T-cell (primary cell): ENCODE measurements at regions of chr3 and their contacts with region 1.

Region 1: DNA sequence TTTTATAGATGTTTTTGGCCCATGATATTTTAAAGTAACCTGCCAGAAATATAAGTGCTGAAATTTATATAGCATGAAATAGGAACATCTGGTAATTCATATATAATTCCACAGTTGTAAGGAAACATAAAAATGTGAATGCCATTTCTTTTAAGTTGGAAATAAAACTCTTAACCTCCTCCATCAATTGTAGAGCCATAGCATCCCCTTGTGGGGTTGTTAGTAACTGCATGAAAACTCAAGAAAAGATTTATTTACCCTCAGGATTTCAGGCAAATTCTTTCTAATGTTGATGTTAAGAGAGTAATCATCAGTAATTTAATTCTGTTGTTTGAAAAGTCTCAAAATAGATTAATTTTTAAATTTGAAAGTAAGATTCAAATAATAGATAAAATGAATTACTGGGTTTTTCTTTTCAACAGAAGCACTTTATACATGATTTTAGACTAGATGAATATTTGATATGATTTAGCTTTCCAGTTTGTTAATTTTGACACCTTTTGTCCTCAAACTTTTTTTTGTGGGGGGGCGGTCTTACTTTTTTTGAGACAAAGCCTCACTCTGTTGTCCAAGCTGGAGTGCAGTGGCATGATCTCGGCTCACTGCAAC is 74.7 kb downstream of the RASA2 start:
- DNase-seq: peak in 20 of 35 experiments; percentile 10 to 86 (median 42)
- ATAC-seq: peak; percentile 43 to 54 (median 51)
- H3K4me3 ChIP-seq: no peak overlapping the region
- H3K4me3 Mint-ChIP-seq: no peak overlapping the region
- H3K27ac ChIP-seq: peak overlapping the region; percentile 1
- H3K27ac Mint-ChIP-seq: peak overlapping the region; percentile 41 to 82
- H3K4me1 ChIP-seq: peaks cover 0 to 37% of the 10 kb centered on the region in 2 experiments
- H3K4me1 Mint-ChIP-seq: peaks cover 31 to 34% (median 32%) of the 10 kb centered on the region in 3 donors
- H3K27me3 ChIP-seq: no peaks in the 10 kb centered on the region
- H3K27me3 Mint-ChIP-seq: no peaks in the 10 kb centered on the region

Region 2: DNA sequence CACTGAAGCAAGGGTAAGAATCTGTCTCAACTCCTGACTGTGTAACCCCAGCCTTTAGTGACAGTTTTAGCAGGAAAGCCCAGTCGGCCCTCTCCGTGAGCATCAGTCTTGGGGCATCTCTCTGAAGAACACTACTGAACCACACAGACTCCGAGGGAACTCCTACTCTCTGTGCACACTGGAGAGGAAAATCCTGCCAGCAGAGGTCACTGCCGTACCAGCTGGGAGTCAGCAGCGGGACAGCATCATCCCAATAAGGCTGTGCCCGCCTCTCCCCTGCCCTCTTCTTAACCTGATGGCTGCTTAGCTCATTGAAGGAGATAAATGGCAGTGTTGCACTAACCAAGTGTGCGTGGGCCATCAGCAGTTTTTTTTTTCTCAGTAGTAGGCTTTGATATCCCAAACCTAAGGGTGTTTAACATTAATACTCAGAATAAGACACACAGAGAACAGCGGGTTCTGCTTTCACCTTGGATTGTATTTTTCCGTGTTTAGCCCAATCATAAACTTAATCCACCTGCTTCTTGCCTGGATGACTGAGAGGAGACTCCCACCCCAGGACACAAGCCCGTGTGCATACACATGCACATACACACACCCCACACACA is 101.3 kb before region 1 on chr3:
- CTCF ChIA-PET with region 1: interaction called, 71 to 104 read pairs
- POLR2A ChIA-PET with region 1: interaction called, 4 to 5 read pairs
- DNase-seq: peak; percentile 71 to 92 (median 85)
- ATAC-seq: peak; percentile 98 to 100 (median 100)
- H3K4me3 ChIP-seq: no peak overlapping the region
- H3K4me3 Mint-ChIP-seq: no peak overlapping the region
- H3K27ac ChIP-seq: no peak overlapping the region
- H3K27ac Mint-ChIP-seq: no peak overlapping the region
- H3K4me1 ChIP-seq: peaks cover 0 to 7% of the 10 kb centered on the region in 2 experiments
- H3K4me1 Mint-ChIP-seq: peaks cover 4 to 11% (median 7%) of the 10 kb centered on the region in 3 donors
- H3K27me3 ChIP-seq: peaks cover 0 to 6% of the 10 kb centered on the region in 2 experiments
- H3K27me3 Mint-ChIP-seq: no peaks in the 10 kb centered on the region

Region 3: DNA sequence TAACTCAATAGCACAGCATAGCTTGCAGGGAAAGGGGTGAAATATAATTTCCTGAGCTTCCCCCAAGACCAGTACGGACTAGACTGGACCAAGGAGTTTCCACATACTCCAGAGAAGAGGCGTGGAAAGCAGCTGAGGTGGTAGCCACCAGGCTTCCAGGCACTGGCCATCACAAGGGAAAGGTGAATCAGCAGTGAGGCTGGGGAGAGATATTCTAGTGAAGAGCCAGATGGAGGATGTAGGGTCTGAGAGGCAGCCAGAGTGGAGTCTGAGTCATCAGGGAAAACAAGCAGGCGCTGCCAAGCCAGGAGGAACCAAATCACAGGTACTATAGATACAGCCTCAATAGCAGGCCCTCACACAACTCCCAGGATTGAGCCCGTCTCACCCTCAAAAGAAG is 84.3 kb before region 1 on chr3:
- CTCF ChIA-PET with region 1: interaction called, 8 to 20 read pairs
- POLR2A ChIA-PET with region 1: interaction called in 1 of 2 experiments, 7 read pairs
- DNase-seq: no peak
- ATAC-seq: peak in 1 of 4 experiments; percentile 26
- H3K4me3 ChIP-seq: no peak overlapping the region
- H3K4me3 Mint-ChIP-seq: no peak overlapping the region
- H3K27ac ChIP-seq: no peak overlapping the region
- H3K27ac Mint-ChIP-seq: no peak overlapping the region
- H3K4me1 ChIP-seq: peaks cover 7 to 21% of the 10 kb centered on the region in 2 experiments
- H3K4me1 Mint-ChIP-seq: peaks cover 36 to 43% (median 38%) of the 10 kb centered on the region in 3 donors
- H3K27me3 ChIP-seq: no peaks in the 10 kb centered on the region
- H3K27me3 Mint-ChIP-seq: no peaks in the 10 kb centered on the region

Region 4: GRCh38 chr3:141487521-141488252 is 73.8 kb before region 1 on chr3:
- CTCF ChIA-PET with region 1: interaction called, 4 to 11 read pairs
- POLR2A ChIA-PET with region 1: interaction called, 3 to 4 read pairs
- DNase-seq: peak; percentile 75 to 91 (median 85)
- ATAC-seq: peak; percentile 69 to 75 (median 74)
- H3K4me3 ChIP-seq: peak overlapping the region; percentile 84
- H3K4me3 Mint-ChIP-seq: peak overlapping the region; percentile 80 to 92 (median 87)
- H3K27ac ChIP-seq: peak overlapping the region; percentile 88
- H3K27ac Mint-ChIP-seq: peak overlapping the region; percentile 97
- H3K4me1 ChIP-seq: peaks cover 33 to 52% of the 10 kb centered on the region in 2 experiments
- H3K4me1 Mint-ChIP-seq: peaks cover 67 to 78% (median 76%) of the 10 kb centered on the region in 3 donors
- H3K27me3 ChIP-seq: no peaks in the 10 kb centered on the region
- H3K27me3 Mint-ChIP-seq: no peaks in the 10 kb centered on the region

Region 5: DNA sequence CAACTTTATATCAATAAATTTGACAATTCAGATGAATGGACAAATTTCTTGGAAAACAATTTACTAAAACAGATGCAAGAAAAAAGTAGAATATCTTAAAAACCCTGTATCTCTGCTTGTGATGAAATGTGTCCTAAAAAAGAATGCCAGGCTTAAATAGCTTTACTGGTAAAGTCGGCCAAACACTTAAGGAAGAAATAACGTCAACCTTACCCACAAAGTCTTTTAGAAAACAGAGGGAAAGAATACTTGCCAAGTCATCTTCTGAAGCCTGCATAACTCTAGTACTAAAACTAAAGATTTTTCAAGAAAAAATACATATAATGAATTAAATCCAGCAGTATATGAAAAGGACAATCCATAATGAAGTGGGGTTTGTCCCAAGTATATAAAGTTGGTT is 36.4 kb after region 1 on chr3:
- CTCF ChIA-PET with region 1: no interaction called
- POLR2A ChIA-PET with region 1: no interaction called
- DNase-seq: no peak
- ATAC-seq: no peak
- H3K4me3 ChIP-seq: no peak overlapping the region
- H3K4me3 Mint-ChIP-seq: no peak overlapping the region
- H3K27ac ChIP-seq: no peak overlapping the region
- H3K27ac Mint-ChIP-seq: peak overlapping the region in 1 of 2 donors; percentile 7
- H3K4me1 ChIP-seq: no peaks in the 10 kb centered on the region
- H3K4me1 Mint-ChIP-seq: no peaks in the 10 kb centered on the region
- H3K27me3 ChIP-seq: no peaks in the 10 kb centered on the region
- H3K27me3 Mint-ChIP-seq: no peaks in the 10 kb centered on the region